A549 (cell line): ENCODE measurements at regions of chr12 and their contacts with region 1.

Region 1: DNA sequence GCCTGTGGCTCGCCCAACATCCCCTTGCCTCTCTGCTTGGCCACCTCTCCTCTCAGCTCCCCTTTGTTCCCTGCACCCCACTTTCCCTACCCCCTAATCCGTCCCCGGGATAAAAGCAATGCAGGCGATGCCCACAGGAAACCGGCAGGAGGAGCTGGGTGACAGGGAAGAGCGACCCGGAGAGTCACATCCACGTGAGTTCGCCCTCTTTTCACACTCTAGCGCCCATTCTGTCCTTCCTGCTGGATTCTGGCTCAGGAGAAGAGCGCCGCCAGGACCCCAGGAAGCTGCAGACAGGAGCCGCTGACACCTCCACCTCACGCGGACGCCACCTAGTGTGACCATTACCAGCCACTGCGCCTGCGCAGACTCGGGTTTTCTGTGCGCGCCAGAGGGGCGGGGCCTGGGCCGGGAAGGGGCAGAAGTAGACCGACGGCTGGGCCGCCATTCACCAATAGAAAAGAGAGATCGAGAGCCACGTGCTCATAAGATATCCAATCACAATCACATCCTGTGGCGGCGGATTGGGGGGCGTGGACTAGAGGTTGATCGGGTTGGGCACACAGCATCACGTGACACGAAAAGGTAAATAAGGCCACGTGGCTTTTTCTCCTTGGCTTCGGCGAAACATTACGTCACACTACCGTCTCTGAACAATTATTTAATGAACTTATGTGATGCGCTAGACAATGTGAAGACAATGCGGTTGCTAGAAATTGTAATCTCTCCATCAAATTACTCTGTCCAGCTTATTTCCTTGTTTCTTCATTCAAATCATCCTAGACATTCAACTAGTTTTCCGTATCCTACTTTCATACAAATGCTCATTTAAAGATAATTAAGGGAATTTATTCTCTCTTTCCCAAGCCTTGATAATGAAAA is 10.1 kb downstream of the PLA2G1B start:
- DNase-seq: peak; percentile 99 to 100
- ATAC-seq: peak; percentile 94 to 98
- H3K4me3 ChIP-seq: peak overlapping the region; percentile 56
- H3K27ac ChIP-seq: peak overlapping the region; percentile 83 to 90
- H3K4me1 ChIP-seq: peaks cover 23% of the 10 kb centered on the region
- CTCF ChIP-seq: peak; percentile 61
- EP300 ChIP-seq: no peak
- POLR2A ChIP-seq: peak; percentile 89
- RAD21 ChIP-seq: 0 out of 5 replicates have a peak, but pooled peaks have one; percentile 20 to 30

Region 2: DNA sequence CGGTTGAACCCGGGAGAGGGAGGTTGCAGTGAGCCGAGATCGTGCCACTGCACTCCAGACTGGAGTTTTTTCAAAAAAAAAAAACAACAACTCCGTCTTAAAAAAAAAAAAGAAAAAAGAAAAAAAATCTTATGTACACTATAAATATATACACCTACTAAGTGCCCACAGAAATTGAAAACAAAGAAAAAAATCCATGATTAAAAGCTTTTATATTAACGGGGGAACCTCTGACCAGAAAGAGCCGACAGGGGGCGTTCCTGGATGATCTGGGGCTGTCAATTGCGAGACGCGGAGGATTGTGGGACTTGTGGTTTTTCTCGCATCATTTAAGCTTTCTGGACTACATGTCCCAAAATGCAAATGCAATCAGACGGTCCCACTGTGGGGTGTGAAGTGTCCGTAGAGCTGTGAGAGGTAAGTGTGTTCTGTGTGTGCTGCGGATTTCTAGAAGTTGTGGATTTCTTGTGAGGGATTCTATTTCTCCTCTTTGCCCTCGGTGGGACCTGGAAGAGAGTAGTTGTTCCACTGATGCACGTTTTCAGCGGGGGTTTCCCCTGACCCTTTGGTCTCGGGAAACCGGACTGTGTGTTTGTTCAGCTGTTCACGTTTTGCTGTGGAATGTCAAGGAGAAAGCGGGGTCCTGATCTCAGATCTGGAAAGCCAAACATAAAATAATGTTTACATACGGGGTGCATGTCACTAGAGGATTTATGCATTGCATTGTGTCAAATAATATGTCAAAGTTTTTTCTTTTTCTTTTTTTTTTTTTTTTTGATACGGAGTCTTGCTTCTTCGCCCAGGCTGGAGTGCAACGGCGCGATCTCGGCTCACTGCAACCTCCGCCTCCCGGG is 15.3 kb before region 1 on chr12 and contains the start of gene SIRT4:
- CTCF ChIA-PET with region 1: interaction called, 53 read pairs
- POLR2A ChIA-PET with region 1: interaction called, 22 read pairs
- DNase-seq: peak; percentile 95 to 98
- ATAC-seq: peak; percentile 98 to 99
- H3K4me3 ChIP-seq: peak within 1 kb of the TSS; percentile 58
- H3K27ac ChIP-seq: peak within 1 kb of the TSS; percentile 63 to 74
- H3K4me1 ChIP-seq: peaks cover 3% of the 10 kb centered on the region; the same call in 1 of the 3 replicates
- CTCF ChIP-seq: peak; percentile 90
- EP300 ChIP-seq: no peak
- POLR2A ChIP-seq: no peak
- RAD21 ChIP-seq: peak; percentile 30 to 48; a peak in 2 of 5 replicates
- polyA plus RNA-seq, gene SIRT4: 1.6 and 2.6 TPM in 2 replicates

Region 3: DNA sequence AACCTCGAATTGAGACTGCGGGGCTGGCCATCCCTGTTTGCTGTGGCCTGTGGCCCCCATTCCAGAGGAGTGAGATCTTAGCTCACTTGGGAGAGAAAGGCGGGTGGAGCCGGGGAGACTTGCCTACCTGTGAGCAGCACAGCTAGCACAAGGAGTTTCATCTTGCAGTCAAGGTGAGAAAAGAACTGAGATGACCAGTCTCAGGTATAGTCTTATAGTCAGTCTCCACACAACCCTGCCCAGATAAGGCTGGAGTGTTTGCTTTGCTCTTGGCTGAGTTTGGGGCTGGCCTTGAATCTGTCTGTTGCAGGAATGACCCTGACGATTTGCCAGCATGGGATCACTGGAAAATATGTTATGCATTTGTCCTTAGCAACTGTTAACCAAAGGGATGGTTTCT is 10.1 kb after region 1 on chr12 and contains the start of gene PLA2G1B:
- CTCF ChIA-PET with region 1: interaction called, 13 read pairs
- POLR2A ChIA-PET with region 1: no interaction called
- DNase-seq: no peak
- ATAC-seq: no peak
- H3K4me3 ChIP-seq: no peak within 1 kb of the TSS
- H3K27ac ChIP-seq: no peak within 1 kb of the TSS
- H3K4me1 ChIP-seq: no peaks in the 10 kb centered on the region
- CTCF ChIP-seq: no peak
- EP300 ChIP-seq: no peak
- POLR2A ChIP-seq: no peak
- RAD21 ChIP-seq: no peak
- polyA plus RNA-seq, gene PLA2G1B: 0.21 TPM in 1 of 2 replicates, not detected in the other

Region 4: GRCh38 chr12:120394483-120395367 is 77.3 kb after region 1 on chr12:
- CTCF ChIA-PET with region 1: no interaction called
- POLR2A ChIA-PET with region 1: no interaction called
- DNase-seq: no peak
- ATAC-seq: peak; percentile 47 to 54; a peak in 4 of 6 replicates
- H3K4me3 ChIP-seq: no peak overlapping the region
- H3K27ac ChIP-seq: no peak overlapping the region
- H3K4me1 ChIP-seq: no peaks in the 10 kb centered on the region
- CTCF ChIP-seq: no peak
- EP300 ChIP-seq: no peak
- POLR2A ChIP-seq: no peak
- RAD21 ChIP-seq: no peak